IMR-90 (cell line): ENCODE measurements at regions of chr5 and their contacts with region 1.

Region 1: DNA sequence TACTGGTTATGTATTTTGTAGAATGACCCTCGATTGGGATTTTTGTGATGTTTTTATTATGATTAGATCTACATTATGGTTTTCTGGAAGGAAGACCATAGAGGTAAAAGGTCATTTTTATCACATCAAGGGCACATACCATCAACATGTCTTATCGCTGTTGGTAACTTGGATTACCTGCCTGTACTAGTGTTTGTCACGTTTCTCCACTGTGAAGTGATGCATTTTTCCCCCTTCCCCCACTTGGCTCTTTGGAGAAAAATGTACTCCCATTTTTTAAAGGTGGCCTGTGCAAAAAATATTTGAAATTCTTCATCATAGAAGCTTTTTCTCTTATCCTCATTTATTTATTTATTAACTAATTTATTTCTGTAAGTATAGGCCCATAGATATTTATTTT is 168.3 kb downstream of the MAT2B start:
- DNase-seq: no peak
- ATAC-seq: no peak
- H3K4me3 ChIP-seq: no peak overlapping the region
- H3K27ac ChIP-seq: no peak overlapping the region
- H3K4me1 ChIP-seq: no peaks in the 10 kb centered on the region
- H3K27me3 ChIP-seq: no peaks in the 10 kb centered on the region
- CTCF ChIP-seq: no peak
- POLR2A ChIP-seq: no peak
- RAD21 ChIP-seq: no peak

Region 2: DNA sequence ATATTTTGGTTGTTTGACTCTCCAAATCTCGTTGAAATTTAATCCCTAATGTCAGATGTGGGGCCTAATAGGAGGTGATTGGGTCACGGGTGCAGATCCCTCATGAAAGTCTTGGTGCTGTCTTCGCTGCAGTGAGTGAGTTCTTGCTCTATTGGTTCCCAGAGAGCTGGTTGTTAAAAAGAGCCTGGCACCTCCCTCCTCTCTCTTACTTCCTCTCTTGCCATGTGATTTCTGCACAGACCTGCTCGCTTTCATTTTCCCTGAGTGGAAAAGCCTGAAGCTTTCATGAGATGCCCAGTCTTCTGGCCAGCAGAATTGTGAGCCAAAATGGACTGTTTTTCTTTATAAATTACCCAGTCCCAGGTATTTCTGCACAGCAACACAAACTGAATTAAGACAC is 53.3 kb after region 1 on chr5:
- CTCF ChIA-PET with region 1: no interaction called
- POLR2A ChIA-PET with region 1: no interaction called
- dilution Hi-C with region 1: no loop called
- in situ Hi-C with region 1: no loop called
- intact Hi-C with region 1: loop called (anchors 2 kb)
- DNase-seq: no peak
- ATAC-seq: no peak
- H3K4me3 ChIP-seq: no peak overlapping the region
- H3K27ac ChIP-seq: no peak overlapping the region
- H3K4me1 ChIP-seq: peaks cover 2% of the 10 kb centered on the region
- H3K27me3 ChIP-seq: no peaks in the 10 kb centered on the region
- CTCF ChIP-seq: no peak
- POLR2A ChIP-seq: no peak
- RAD21 ChIP-seq: no peak